Activated T-helper 1 cell treated with anti-CD3 and anti-CD28 coated beads, Interleukin-12 subunit alpha, Interleukin-12 subunit beta, Interleukin-2, Interleukin-4 antibody, amounts not matched to agents 30 ng/mL and 10 ng/mL and 1 ng/mL, durations not matched to agents 14 hours and 24 hours and 36 hours (primary cell): ENCODE measurements at regions of chr2 and their contacts with region 1.

Region 1: DNA sequence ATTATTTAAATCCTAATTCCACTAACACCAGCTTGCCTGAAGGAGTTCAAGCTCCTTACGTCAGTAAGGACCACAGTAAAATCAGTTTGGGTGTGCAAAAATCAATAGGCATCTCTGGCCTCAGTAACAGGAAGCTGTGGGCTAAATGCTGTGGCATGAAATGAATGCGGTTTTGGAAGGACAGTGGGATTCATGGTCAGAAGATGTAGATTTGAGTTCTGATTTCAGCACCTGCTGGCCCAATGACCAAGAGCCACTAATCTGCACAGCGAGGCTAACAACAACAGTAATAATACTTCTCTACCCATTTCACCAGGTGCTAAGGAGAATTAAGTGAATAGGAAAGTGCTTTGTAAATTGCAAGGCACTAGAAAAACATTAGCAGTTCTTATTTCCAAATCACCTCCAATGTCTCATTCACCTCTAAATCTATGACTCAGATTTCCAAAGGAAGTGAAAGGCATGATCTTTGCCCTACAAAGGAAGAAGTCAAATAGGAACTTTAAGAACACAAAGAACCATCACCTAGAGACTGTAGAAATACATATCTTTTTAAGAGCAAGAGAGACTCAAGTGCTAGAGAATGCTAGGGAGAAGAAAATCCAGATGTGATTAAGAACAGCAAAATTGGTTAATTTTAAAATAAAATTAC is 172.6 kb downstream of the ANKRD44 start:
- DNase-seq: no peak
- H3K4me3 Mint-ChIP-seq: peak overlapping the region; percentile 34
- H3K27ac Mint-ChIP-seq: peak overlapping the region; percentile 84
- H3K4me1 Mint-ChIP-seq: peaks cover 80% of the 10 kb centered on the region
- H3K27me3 Mint-ChIP-seq: no peaks in the 10 kb centered on the region

Region 2: GRCh38 chr2:196544906-196545433 is 593.0 kb before region 1 on chr2:
- intact Hi-C with region 1: no loop called
- DNase-seq: no peak
- H3K4me3 Mint-ChIP-seq: no peak overlapping the region
- H3K27ac Mint-ChIP-seq: no peak overlapping the region
- H3K4me1 Mint-ChIP-seq: no peaks in the 10 kb centered on the region
- H3K27me3 Mint-ChIP-seq: peaks cover 8% of the 10 kb centered on the region

Region 3: DNA sequence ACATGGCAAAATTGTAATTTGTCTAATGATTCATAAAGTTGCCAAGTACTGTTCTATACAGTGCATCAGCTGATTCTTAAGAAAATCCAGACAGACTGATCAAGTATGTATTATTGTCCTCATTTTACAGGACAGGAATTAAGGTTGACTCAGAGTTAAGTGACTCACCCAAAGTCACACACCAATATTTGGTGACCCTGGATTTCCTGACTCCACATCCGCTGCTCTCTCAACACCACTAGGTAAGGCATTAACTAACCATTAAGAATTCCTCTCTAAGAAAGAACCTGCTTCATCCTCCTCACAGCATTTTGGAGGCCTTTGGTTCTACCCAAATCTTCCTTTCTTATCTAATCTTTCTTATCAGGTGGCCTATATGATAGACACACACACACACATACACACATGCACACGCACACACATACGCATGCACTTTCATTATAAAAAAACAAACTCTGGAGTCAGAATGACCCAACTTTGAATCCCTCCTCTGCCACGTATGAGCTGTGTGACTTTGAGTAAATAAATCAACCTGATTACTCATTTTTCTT is 21.8 kb after region 1 on chr2:
- intact Hi-C with region 1: loop called (anchors 2 kb)
- DNase-seq: no peak
- H3K4me3 Mint-ChIP-seq: no peak overlapping the region
- H3K27ac Mint-ChIP-seq: peak overlapping the region; percentile 82
- H3K4me1 Mint-ChIP-seq: peaks cover 53% of the 10 kb centered on the region
- H3K27me3 Mint-ChIP-seq: no peaks in the 10 kb centered on the region

Region 4: GRCh38 chr2:197184959-197185586 is 47.1 kb after region 1 on chr2:
- intact Hi-C with region 1: no loop called
- DNase-seq: no peak
- H3K4me3 Mint-ChIP-seq: no peak overlapping the region
- H3K27ac Mint-ChIP-seq: peak overlapping the region; percentile 68
- H3K4me1 Mint-ChIP-seq: peaks cover 72% of the 10 kb centered on the region
- H3K27me3 Mint-ChIP-seq: no peaks in the 10 kb centered on the region

Region 5: DNA sequence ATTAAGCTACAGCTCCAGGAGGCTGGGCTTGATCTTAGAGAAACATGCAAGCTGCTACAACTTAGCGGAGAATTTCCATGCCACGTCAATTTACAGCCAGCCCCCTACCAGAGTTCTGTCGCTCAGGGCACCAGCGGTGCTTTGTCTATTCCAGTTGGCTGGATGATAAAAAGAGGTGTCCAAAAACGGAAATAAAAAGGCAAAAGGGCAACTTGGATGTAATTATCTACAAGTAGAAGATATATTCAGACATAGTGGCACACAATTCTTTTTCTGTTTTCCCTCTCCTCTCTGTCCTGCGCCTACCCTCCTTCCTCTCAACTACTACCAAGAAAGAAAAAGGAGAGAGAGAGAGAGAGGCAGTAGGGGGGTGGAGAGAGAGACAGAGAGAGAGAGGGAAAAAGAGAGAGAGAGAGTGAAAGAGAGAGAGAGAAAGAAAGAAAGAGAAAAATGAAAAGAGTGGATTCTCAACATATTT is 537.8 kb after region 1 on chr2:
- intact Hi-C with region 1: no loop called
- DNase-seq: no peak
- H3K4me3 Mint-ChIP-seq: no peak overlapping the region
- H3K27ac Mint-ChIP-seq: no peak overlapping the region
- H3K4me1 Mint-ChIP-seq: no peaks in the 10 kb centered on the region
- H3K27me3 Mint-ChIP-seq: peaks cover 10% of the 10 kb centered on the region